ENCODE measurements at regions of chr13 and their contacts with region 1.

Region 1: GRCh38 chr13:76777096-76777495 is 109.1 kb downstream of the KCTD12 start:
- DNase-seq: no peak
- ATAC-seq: no peak
- H3K4me3 ChIP-seq: no peak overlapping the region
- H3K27ac ChIP-seq: no peak overlapping the region
- H3K4me1 ChIP-seq: peaks cover 3% of the 10 kb centered on the region; the same call in 1 of the 2 replicates
- H3K27me3 ChIP-seq: no peaks in the 10 kb centered on the region
- CTCF ChIP-seq: no peak
- POLR2A ChIP-seq: no peak
- RAD21 ChIP-seq: no peak

Region 2: DNA sequence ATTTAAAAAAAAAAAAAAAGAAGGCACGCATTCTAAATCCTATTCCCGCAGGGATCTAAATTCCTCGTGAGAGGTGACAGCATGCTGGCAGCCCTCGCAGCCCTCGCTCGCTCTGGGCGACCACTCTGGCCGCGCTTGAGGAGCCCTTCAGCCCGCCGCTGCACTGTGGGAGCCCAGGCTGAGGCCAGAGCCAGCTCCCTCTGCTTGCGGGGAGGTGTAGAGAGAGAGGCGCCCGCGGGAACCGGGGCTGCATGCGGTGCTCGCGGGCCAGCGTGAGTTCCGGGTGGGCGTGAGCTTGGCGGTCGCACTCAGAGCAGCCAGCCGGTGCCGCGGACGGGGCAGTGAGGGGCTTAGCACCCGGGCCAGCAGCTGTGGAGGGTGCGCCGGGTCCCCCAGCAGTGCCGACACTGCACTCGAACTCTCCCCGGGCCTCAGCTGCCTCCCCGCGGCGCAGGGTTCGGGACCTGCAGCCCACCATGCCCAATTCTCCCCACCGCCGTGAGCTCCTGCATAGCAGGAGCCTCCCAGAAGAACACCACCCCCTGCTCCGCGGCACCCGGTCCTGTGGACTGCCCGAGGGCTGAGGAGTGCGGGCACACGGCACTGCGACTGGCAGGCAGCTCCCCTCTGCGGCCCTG is 587.1 kb before region 1 on chr13:
- CTCF ChIA-PET with region 1: no interaction called
- POLR2A ChIA-PET with region 1: no interaction called
- dilution Hi-C with region 1: no loop called
- in situ Hi-C with region 1: no loop called
- intact Hi-C with region 1: no loop called
- DNase-seq: no peak
- ATAC-seq: no peak
- H3K4me3 ChIP-seq: no peak overlapping the region
- H3K27ac ChIP-seq: no peak overlapping the region
- H3K4me1 ChIP-seq: peaks cover 2% of the 10 kb centered on the region; the same call in 1 of the 2 replicates
- H3K27me3 ChIP-seq: no peaks in the 10 kb centered on the region
- CTCF ChIP-seq: no peak
- POLR2A ChIP-seq: no peak
- RAD21 ChIP-seq: no peak

Region 3: DNA sequence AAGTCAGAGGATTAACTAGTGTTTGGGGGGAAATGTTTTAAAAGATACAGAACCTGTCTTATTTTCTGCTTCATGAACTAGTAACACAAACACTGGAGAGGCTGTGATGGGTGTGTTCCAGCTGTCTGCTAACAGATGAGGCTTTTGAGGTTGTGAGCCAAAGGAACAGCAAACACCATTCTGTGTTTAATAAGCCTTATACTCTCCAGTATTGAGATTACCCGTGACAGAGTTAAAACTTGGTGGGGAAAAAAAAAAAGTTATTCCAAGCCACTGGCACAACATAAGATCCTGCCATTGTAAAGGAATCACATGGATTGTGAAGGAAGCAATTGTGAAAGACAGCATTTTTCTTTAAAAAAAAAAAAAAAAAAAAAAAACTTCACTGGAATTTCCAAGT is 60.7 kb after region 1 on chr13:
- CTCF ChIA-PET with region 1: no interaction called
- POLR2A ChIA-PET with region 1: no interaction called
- dilution Hi-C with region 1: no loop called
- in situ Hi-C with region 1: no loop called
- intact Hi-C with region 1: loop called (anchors 2 kb)
- DNase-seq: peak; percentile 32
- ATAC-seq: peak; percentile 61
- H3K4me3 ChIP-seq: no peak overlapping the region
- H3K27ac ChIP-seq: no peak overlapping the region
- H3K4me1 ChIP-seq: peaks cover 10% of the 10 kb centered on the region
- H3K27me3 ChIP-seq: no peaks in the 10 kb centered on the region
- CTCF ChIP-seq: no peak
- POLR2A ChIP-seq: no peak
- RAD21 ChIP-seq: no peak